PC-3 (cell line): ENCODE measurements at regions of chr7 and their contacts with region 1.

Region 1: DNA sequence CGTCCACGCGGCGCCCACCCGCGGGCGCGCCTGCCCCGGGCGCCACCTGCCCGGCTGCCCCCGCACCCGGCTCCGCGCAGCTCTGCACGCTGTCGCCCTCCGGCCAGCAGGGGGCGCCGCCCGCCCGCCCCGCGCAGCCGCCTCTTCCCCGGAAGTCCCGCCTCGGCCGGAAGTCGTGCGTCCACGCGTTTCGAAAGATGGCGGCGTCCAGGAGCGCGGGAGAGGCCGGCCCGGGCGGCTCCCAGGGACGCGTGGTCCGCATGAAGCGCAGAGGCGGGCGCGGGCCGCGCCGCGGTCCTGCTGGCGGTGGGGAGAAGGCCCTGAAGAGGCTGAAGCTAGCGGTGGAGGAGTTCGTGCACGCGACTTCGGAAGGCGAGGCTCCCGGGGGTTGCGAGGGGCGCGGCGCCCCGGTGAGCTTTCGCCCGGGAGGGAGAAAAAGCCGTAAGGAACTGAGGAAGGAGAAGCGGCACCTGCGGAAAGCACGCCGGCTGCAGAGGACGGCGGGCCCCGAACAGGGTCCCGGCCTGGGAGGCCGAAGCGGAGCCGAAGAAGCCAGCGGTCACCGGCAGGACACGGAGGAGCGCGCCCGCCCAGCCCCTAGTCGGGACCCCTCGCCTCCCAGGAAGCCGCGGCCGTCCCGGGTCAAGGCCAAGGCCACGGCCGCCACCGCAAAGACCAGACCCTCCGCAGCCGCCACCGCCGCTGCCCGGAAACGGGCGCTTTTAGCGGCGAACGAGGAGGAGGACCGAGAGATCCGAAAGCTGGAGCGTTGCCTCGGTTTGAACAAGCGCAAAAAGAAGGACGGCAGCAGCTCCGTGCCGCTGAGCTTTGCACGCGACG is at the start of gene NOM1:
- DNase-seq: peak; percentile 87
- ATAC-seq: peak; percentile 72
- H3K4me3 ChIP-seq: peak within 1 kb of the TSS; percentile 96
- H3K27ac ChIP-seq: peak within 1 kb of the TSS; percentile 59
- H3K4me1 ChIP-seq: peaks cover 14% of the 10 kb centered on the region
- H3K27me3 ChIP-seq: no peaks in the 10 kb centered on the region
- CTCF ChIP-seq: peak; percentile 47
- total RNA-seq, gene NOM1: 17.7 and 28.5 TPM in 2 replicates

Region 2: DNA sequence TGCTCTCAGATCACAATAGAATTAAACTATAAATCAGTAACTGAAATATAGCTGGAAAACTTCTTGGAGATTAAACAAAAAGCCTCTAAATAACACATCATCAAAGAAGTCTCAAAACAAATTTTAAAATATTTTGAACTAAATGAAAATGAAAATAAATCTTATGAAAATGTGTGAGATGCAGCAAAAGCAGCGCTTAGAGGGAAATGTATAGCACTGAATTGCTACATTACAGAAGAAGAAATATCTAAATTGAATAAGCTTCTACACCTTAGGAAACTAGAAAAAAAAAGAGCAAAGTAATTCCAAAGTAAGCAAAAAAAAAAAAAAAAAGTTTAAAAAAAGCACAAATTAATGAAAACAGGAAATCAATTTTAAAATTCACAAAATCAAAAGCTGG is 92.0 kb before region 1 on chr7:
- CTCF ChIA-PET with region 1: interaction called, 12 read pairs
- POLR2A ChIA-PET with region 1: interaction called, 4 read pairs
- intact Hi-C with region 1: no loop called
- DNase-seq: no peak
- ATAC-seq: no peak
- H3K4me3 ChIP-seq: no peak overlapping the region
- H3K27ac ChIP-seq: no peak overlapping the region
- H3K4me1 ChIP-seq: no peaks in the 10 kb centered on the region
- H3K27me3 ChIP-seq: no peaks in the 10 kb centered on the region
- CTCF ChIP-seq: no peak

Region 3: DNA sequence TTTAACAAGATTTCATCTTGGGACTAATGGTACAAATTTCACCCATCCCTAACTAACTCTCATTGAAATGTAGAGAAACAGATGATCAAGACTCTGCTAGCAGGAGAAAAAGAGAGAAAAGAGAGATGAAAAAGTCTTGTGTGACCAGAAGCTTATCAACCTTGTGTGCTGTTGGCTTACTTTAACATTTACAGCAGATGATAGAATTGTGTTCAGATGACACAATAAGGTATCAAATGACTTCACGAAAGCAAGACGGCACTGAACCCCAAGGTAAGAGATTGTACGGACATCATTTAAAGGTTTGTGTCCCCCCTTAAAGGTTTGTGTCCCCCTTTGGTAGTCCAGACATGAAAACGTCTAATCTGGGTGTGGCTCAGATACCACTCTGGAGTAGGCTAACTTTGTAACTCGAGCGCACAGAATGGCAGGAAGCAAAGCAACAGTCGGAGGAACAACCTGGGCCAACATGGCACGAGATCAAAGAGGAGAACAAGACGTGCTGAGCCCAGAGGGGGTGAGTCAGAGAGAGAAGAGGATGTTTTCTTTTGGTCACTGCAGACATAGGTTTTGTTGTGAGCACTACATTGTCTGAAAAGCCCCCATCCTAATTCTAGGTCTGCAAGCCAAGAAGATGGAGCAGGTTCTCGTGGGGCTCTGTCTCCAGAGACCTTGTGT is 46.4 kb before region 1 on chr7:
- CTCF ChIA-PET with region 1: no interaction called
- POLR2A ChIA-PET with region 1: no interaction called
- intact Hi-C with region 1: loop called (anchors 2 kb)
- DNase-seq: peak; percentile 90
- ATAC-seq: peak; percentile 98
- H3K4me3 ChIP-seq: peak overlapping the region; percentile 25; the same call in 1 of the 2 replicates
- H3K27ac ChIP-seq: 0 out of 2 replicates have a peak overlapping the region, but pooled peaks have one; percentile 23
- H3K4me1 ChIP-seq: peaks cover 12% of the 10 kb centered on the region
- H3K27me3 ChIP-seq: no peaks in the 10 kb centered on the region
- CTCF ChIP-seq: no peak

Region 4: DNA sequence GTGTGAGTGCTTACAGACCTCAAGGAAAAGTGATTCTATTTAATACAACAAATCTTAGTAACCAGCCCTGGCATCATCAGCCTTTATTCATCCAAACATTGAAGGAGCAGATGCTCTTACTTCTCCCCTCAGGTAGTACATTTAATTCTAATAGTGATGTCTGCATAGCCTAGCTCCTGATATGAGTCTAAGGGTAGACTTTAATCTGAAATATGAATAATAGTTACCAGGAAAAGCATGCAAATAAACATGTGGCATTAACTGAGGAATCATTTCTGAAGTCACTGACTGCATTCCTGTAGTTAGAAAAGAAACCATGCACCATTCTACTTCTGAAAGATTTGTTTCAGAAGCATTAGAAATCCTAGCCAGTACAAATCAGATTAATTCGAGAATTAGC is 31.1 kb before region 1 on chr7:
- CTCF ChIA-PET with region 1: no interaction called
- POLR2A ChIA-PET with region 1: no interaction called
- intact Hi-C with region 1: no loop called
- DNase-seq: no peak
- ATAC-seq: no peak
- H3K4me3 ChIP-seq: no peak overlapping the region
- H3K27ac ChIP-seq: no peak overlapping the region
- H3K4me1 ChIP-seq: no peaks in the 10 kb centered on the region
- H3K27me3 ChIP-seq: peaks cover 3% of the 10 kb centered on the region; the same call in 1 of the 2 replicates
- CTCF ChIP-seq: no peak

Region 5: DNA sequence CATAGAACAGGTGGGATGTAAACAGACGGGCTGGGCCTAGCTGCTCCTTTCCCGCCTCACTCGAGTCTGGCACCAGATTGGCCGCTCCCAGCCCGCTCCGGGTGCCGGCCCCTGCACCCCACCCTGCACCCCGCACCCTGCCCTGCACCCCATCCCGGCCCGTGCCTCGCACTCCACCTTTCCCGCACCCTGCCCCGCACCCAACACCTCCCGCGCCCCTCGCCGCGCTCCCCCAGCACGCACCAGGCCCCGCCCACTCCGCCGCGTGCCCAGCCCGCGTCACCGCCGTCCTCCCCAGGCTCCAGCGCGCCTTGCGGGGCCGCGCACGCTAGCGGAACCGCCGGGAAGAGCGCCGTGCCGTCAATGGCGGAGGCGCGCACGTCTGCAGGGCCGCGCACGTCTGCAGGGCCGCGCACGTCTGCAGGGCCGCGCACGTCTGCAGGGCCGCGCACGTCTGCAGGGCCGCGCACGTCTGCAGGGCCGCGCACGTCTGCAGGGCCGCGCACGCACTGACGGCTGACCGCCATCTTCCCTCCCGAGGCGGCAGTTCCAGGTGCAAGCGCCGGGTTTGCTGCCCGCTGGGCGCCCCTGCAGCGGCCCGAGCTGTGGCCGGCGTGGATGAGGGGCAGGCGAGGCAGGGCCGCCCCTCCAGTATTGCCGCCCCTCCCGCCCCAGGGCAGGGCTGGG is 188.8 kb after region 1 on chr7 and contains the start of gene UBE3C:
- CTCF ChIA-PET with region 1: no interaction called
- POLR2A ChIA-PET with region 1: interaction called, 3 read pairs
- intact Hi-C with region 1: loop called (anchors 5 kb)
- DNase-seq: peak; percentile 88
- ATAC-seq: peak; percentile 84
- H3K4me3 ChIP-seq: peak within 1 kb of the TSS; percentile 93
- H3K27ac ChIP-seq: peak within 1 kb of the TSS; percentile 58
- H3K4me1 ChIP-seq: peaks cover 31% of the 10 kb centered on the region
- H3K27me3 ChIP-seq: no peaks in the 10 kb centered on the region
- CTCF ChIP-seq: no peak
- total RNA-seq, gene UBE3C: 83.1 and 86.6 TPM in 2 replicates

Region 6: GRCh38 chr7:157273208-157274093 is 323.7 kb after region 1 on chr7:
- CTCF ChIA-PET with region 1: no interaction called
- POLR2A ChIA-PET with region 1: no interaction called
- intact Hi-C with region 1: loop called (anchors 10 kb)
- DNase-seq: peak; percentile 82
- ATAC-seq: peak; percentile 78
- H3K4me3 ChIP-seq: no peak overlapping the region
- H3K27ac ChIP-seq: 0 out of 2 replicates have a peak overlapping the region, but pooled peaks have one; percentile 12
- H3K4me1 ChIP-seq: peaks cover 27% of the 10 kb centered on the region
- H3K27me3 ChIP-seq: no peaks in the 10 kb centered on the region
- CTCF ChIP-seq: peak; percentile 91